Activated CD4-positive, alpha-beta T cell treated with anti-CD3 and anti-CD28 coated beads for 36 hours (primary cell): ENCODE measurements at regions of chr9 and their contacts with region 1.

Region 1: GRCh38 chr9:976258-976942 is at the start of gene DMRT3:
- DNase-seq: peak; percentile 32
- ATAC-seq: no peak
- H3K4me3 Mint-ChIP-seq: no peak within 1 kb of the TSS
- H3K27ac Mint-ChIP-seq: no peak within 1 kb of the TSS
- H3K4me1 Mint-ChIP-seq: peaks cover 7% of the 10 kb centered on the region
- H3K27me3 Mint-ChIP-seq: peaks cover 66% of the 10 kb centered on the region
- total RNA-seq, gene DMRT3: not detected

Region 2: GRCh38 chr9:503881-504852 is 472.2 kb before region 1 on chr9:
- CTCF ChIA-PET with region 1: no interaction called
- POLR2A ChIA-PET with region 1: no interaction called
- intact Hi-C with region 1: no loop called
- DNase-seq: peak; percentile 81
- ATAC-seq: peak; percentile 92
- H3K4me3 Mint-ChIP-seq: peak within 1 kb of the TSS; percentile 74
- H3K27ac Mint-ChIP-seq: peak within 1 kb of the TSS; percentile 63
- H3K4me1 Mint-ChIP-seq: peaks cover 8% of the 10 kb centered on the region
- H3K27me3 Mint-ChIP-seq: peaks cover 26% of the 10 kb centered on the region

Region 3: DNA sequence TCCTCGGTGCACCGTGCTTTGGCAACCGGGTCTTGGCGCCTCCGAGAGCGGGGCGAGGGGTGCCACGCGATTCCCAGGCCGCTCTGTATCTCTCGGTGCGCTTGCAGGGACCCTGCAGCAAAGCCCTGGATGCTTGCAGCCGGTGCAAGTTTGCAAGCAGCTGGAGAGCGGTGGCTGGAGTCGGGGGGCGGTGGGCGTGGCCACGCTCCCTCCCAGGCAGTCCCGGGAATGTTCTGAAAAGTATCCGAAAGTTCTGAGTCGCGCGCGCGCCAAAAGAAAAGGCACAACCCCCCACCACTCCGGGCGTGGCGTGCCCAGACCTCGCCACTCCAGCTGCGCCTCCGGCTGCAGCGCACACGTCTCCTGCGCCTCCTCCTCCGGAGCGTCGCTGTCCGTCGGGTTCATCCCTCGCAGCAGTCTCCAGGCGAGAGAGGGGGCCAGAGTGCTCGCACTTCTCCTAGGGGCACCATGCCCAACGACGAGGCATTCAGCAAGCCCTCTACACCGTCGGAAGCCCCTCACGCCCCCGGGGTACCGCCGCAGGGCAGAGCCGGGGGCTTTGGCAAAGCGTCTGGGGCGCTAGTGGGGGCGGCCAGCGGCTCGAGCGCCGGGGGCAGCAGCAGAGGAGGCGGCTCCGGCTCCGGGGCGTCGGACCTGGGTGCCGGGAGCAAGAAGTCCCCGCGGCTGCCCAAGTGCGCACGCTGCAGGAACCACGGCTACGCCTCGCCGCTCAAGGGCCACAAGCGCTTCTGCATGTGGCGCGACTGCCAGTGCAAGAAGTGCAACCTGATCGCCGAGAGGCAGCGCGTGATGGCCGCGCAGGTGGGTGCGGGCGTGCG is 134.8 kb before region 1 on chr9 and contains the start of gene DMRT1:
- CTCF ChIA-PET with region 1: no interaction called
- POLR2A ChIA-PET with region 1: no interaction called
- intact Hi-C with region 1: loop called (anchors 1 to 5 kb)
- DNase-seq: peak; percentile 23
- ATAC-seq: no peak
- H3K4me3 Mint-ChIP-seq: no peak within 1 kb of the TSS
- H3K27ac Mint-ChIP-seq: no peak within 1 kb of the TSS
- H3K4me1 Mint-ChIP-seq: peaks cover 4% of the 10 kb centered on the region
- H3K27me3 Mint-ChIP-seq: peaks cover 50% of the 10 kb centered on the region
- total RNA-seq, gene DMRT1: not detected

Region 4: DNA sequence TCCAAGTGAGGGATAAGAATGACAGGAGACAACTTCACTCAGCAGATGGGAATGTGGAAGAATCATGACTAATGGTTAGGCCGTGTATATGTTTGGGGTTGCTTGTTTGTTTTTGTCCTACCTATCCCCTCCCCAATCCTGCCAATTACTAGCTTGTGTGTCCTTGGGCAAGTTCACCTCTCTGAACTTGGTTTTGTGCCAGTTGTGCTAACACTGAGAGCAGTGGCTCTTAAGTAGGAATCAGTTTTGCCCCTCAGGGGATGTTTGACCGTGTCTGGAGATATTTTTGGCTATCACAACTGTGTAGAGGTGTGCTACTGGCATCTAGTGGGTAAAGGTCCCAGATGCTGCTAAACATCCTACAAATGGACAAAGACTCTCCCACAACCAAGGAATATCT is 360.8 kb after region 1 on chr9:
- CTCF ChIA-PET with region 1: no interaction called
- POLR2A ChIA-PET with region 1: no interaction called
- intact Hi-C with region 1: no loop called
- DNase-seq: no peak
- ATAC-seq: no peak
- H3K4me3 Mint-ChIP-seq: no peak overlapping the region
- H3K27ac Mint-ChIP-seq: no peak overlapping the region
- H3K4me1 Mint-ChIP-seq: no peaks in the 10 kb centered on the region
- H3K27me3 Mint-ChIP-seq: no peaks in the 10 kb centered on the region